ENCODE measurements at regions of chr17 and their contacts with region 1.

Region 1: DNA sequence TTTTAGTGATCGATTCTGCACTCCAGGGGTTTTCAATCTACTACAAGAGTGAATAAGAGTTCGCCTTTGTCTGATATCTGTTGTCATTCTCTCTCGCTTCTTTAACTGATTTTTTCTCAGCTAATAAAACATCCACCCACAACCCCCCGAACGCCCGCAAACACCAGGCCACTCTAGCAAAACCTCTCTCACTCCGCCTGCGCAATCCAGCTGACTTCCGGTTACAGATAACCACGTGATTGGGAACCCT is 338 bp upstream of the RPL19 start:
- DNase-seq: peak; percentile 70 to 96 (median 86)
- ATAC-seq: peak; percentile 61
- H3K4me3 ChIP-seq: peak overlapping the region; percentile 77 to 87
- H3K4me3 Mint-ChIP-seq: peak overlapping the region; percentile 95
- H3K27ac ChIP-seq: peak overlapping the region; percentile 94 to 98
- H3K27ac Mint-ChIP-seq: peak overlapping the region; percentile 100
- H3K4me1 ChIP-seq: peaks cover 56% of the 10 kb centered on the region
- H3K4me1 Mint-ChIP-seq: peaks cover 69% of the 10 kb centered on the region
- H3K27me3 ChIP-seq: no peaks in the 10 kb centered on the region
- H3K27me3 Mint-ChIP-seq: no peaks in the 10 kb centered on the region
- CTCF ChIP-seq: no peak

Region 2: GRCh38 chr17:38799378-38800236 is 400.1 kb before region 1 on chr17 and contains the start of gene PIP4K2B:
- CTCF ChIA-PET with region 1: no interaction called
- POLR2A ChIA-PET with region 1: no interaction called
- intact Hi-C with region 1: loop called in 1 of 2 experiments (anchors 1 kb)
- DNase-seq: peak; percentile 58 to 93 (median 82)
- ATAC-seq: peak; percentile 76
- H3K4me3 ChIP-seq: peak within 1 kb of the TSS; percentile 88 to 95
- H3K4me3 Mint-ChIP-seq: peak within 1 kb of the TSS; percentile 91
- H3K27ac ChIP-seq: peak within 1 kb of the TSS; percentile 54 to 86
- H3K27ac Mint-ChIP-seq: peak within 1 kb of the TSS; percentile 90
- H3K4me1 ChIP-seq: peaks cover 31% of the 10 kb centered on the region
- H3K4me1 Mint-ChIP-seq: peaks cover 40% of the 10 kb centered on the region
- H3K27me3 ChIP-seq: no peaks in the 10 kb centered on the region
- H3K27me3 Mint-ChIP-seq: no peaks in the 10 kb centered on the region
- CTCF ChIP-seq: no peak
- total RNA-seq, gene PIP4K2B: 9.9 to 13.0 TPM

Region 3: DNA sequence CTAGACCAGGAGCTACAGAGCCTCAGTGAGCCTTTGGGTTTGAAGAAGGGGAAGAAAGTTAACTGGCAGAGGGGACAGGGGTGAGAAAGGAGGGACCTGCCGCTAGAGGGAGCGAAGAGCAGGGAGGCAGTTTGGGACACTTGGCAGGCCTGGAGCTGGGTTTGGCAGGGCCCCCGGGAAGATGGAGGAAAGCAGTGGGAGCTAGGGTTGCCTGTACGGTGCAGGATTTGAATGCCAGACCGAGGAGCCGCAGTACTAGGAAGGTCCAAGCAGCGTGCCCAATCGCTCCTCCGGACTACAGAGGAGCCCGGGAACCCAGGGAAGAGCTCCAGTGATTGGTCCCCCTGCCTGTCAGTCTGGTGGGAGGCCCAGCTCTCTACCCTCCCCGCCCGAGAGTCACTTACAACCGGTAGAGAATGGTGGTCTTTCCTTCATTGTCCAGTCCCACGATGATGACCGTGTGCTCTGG is 35.0 kb before region 1 on chr17:
- CTCF ChIA-PET with region 1: interaction called, 6 read pairs
- POLR2A ChIA-PET with region 1: interaction called, 12 read pairs
- intact Hi-C with region 1: loop called in 1 of 2 experiments (anchors 2 kb)
- DNase-seq: peak; percentile 53 to 90 (median 74)
- ATAC-seq: peak; percentile 89
- H3K4me3 ChIP-seq: peak overlapping the region; percentile 68 to 95
- H3K4me3 Mint-ChIP-seq: peak overlapping the region; percentile 91
- H3K27ac ChIP-seq: peak overlapping the region in 1 of 2 experiments; percentile 21
- H3K27ac Mint-ChIP-seq: peak overlapping the region; percentile 67
- H3K4me1 ChIP-seq: peaks cover 20% of the 10 kb centered on the region
- H3K4me1 Mint-ChIP-seq: peaks cover 33% of the 10 kb centered on the region
- H3K27me3 ChIP-seq: peaks cover 0 to 3% of the 10 kb centered on the region in 2 experiments
- H3K27me3 Mint-ChIP-seq: peaks cover 11% of the 10 kb centered on the region
- CTCF ChIP-seq: peak; percentile 80

Region 4: DNA sequence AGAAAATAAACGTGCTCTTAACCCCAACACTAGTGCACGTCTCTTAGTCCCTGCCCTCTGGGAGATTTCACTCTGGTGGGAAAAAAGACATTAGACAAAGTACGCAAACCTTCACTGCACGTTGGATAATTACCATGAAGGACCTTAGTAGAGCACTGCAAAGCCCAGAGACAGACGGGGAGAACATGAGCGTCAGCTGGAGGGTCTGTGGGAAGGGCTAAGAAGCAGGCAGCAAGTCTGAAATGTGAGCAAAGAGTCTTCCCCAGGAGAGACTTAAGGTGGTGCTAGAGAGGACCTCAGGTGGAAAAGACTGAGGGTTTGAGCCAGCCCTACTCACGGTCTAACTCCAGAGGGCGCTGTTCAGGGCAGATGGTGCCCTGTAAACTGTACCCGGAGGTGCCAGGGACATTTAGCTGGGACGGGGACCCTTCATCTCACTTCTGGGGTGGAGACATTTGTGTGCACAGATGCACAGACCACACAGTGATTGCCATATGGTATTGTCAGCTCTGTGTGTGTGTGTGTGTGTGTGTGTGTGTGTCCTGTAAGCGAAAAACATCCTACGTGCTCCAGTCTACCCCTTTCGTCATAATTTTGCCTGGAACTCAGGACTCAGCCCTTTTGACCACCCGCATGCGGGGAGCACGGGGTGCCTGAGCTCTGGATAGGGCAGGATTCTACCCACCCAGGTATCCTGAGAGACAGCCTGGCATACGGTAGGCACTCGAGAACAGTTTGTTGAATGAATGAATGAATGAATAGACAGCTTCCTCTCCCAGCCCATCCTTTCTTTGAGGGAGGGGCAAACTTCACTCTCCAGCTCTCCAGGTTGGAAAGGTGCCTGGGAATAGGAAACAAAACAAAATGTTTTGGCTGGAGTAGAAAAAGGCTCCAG is 36.1 kb after region 1 on chr17:
- CTCF ChIA-PET with region 1: interaction called, 429 read pairs
- POLR2A ChIA-PET with region 1: interaction called, 23 read pairs
- intact Hi-C with region 1: no loop called
- DNase-seq: peak in 6 of 9 experiments; percentile 32 to 80 (median 60)
- ATAC-seq: peak; percentile 42
- H3K4me3 ChIP-seq: no peak overlapping the region
- H3K4me3 Mint-ChIP-seq: no peak overlapping the region
- H3K27ac ChIP-seq: peak overlapping the region in 1 of 2 experiments; percentile 48
- H3K27ac Mint-ChIP-seq: peak overlapping the region; percentile 79
- H3K4me1 ChIP-seq: peaks cover 55% of the 10 kb centered on the region
- H3K4me1 Mint-ChIP-seq: peaks cover 38% of the 10 kb centered on the region
- H3K27me3 ChIP-seq: no peaks in the 10 kb centered on the region
- H3K27me3 Mint-ChIP-seq: peaks cover 8% of the 10 kb centered on the region
- CTCF ChIP-seq: peak; percentile 59

Region 5: DNA sequence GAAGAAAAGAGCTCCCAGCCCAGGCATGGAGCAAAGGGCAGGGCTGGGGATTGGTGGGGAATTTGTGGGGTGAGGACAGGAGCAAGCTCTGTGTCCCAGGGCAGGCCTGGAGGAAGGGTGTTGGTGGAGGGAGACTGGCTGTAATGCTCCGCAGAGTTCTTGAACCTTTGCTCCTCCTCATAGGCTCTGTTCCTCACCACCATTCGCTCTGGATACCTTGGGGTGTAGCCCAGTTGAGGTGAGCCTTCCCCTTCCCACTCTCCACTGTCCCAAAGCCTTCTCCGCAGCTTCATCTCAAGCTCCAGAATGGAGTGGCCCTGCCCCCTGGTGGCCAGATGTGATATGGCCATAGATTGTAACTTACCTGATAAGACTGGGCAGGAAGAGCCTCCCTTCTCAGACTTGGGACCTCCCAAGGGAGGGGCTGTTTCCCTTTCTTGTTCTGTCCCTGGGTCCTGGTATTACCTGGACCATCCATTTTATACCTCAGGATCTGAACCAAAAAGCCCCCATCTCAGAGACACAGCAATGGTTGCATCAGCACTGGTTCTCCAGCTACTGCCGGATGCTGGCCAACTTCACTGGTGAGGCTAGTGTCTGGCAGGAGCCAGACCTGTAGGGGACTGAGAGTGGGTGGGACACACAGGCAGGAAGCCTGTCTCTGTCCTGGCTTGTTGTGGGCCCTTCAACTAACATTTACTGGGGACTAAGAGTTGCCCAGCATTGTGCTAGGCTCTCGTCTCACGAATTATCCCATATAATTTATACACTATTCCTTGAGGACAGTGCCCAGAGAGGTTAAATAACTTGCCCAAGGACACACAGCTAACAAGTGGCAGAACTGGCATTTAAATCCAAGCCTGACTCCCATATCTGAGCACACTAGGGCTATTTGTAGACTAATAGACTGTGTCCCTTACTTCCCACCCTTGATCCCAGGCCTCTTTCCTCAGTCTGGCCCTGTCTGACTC is 45.1 kb after region 1 on chr17:
- CTCF ChIA-PET with region 1: interaction called, 429 read pairs
- POLR2A ChIA-PET with region 1: interaction called, 23 read pairs
- intact Hi-C with region 1: no loop called
- DNase-seq: peak; percentile 71 to 94 (median 87)
- ATAC-seq: peak; percentile 94
- H3K4me3 ChIP-seq: no peak overlapping the region
- H3K4me3 Mint-ChIP-seq: no peak overlapping the region
- H3K27ac ChIP-seq: no peak overlapping the region
- H3K27ac Mint-ChIP-seq: no peak overlapping the region
- H3K4me1 ChIP-seq: peaks cover 15% of the 10 kb centered on the region
- H3K4me1 Mint-ChIP-seq: peaks cover 14% of the 10 kb centered on the region
- H3K27me3 ChIP-seq: no peaks in the 10 kb centered on the region
- H3K27me3 Mint-ChIP-seq: peaks cover 2% of the 10 kb centered on the region
- CTCF ChIP-seq: peak; percentile 90

Region 6: DNA sequence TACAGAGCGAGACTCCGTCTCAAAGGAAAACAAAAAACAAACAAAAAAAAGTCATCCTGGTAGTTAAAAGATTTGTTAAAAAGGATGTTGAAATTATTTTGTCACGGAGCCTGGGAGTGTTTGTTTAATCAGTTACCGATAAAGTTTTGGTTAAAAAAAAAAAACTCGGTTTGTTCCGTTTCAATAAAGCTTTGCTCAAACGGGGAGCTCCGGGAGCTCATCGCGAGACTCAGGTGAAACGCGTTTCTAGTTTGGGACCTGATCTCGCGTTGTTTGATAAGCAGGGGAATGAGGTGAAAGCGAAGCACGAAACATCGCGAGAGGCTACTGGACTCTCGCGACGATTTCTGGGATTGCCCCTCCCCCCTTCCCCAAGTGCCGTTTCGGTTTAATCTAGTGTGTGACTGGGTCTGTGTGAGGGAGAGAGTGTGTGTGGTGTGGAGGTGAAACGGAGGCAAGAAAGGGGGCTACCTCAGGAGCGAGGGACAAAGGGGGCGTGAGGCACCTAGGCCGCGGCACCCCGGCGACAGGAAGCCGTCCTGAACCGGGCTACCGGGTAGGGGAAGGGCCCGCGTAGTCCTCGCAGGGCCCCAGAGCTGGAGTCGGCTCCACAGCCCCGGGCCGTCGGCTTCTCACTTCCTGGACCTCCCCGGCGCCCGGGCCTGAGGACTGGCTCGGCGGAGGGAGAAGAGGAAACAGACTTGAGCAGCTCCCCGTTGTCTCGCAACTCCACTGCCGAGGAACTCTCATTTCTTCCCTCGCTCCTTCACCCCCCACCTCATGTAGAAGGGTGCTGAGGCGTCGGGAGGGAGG is 261.6 kb after region 1 on chr17 and contains the start of gene CDK12:
- CTCF ChIA-PET with region 1: no interaction called
- POLR2A ChIA-PET with region 1: interaction called, 5 read pairs
- intact Hi-C with region 1: loop called in 1 of 2 experiments (anchors 10 kb)
- DNase-seq: peak; percentile 90 to 99 (median 94)
- ATAC-seq: peak; percentile 86
- H3K4me3 ChIP-seq: peak within 1 kb of the TSS; percentile 75 to 84
- H3K4me3 Mint-ChIP-seq: peak within 1 kb of the TSS; percentile 95
- H3K27ac ChIP-seq: peak within 1 kb of the TSS; percentile 81 to 91
- H3K27ac Mint-ChIP-seq: peak within 1 kb of the TSS; percentile 96
- H3K4me1 ChIP-seq: peaks cover 21% of the 10 kb centered on the region
- H3K4me1 Mint-ChIP-seq: peaks cover 42% of the 10 kb centered on the region
- H3K27me3 ChIP-seq: no peaks in the 10 kb centered on the region
- H3K27me3 Mint-ChIP-seq: no peaks in the 10 kb centered on the region
- CTCF ChIP-seq: no peak
- total RNA-seq, gene CDK12: 95.5 to 101 TPM

Measured in CD8-positive, alpha-beta T cell (primary cell).